Tibial artery (tissue), 4 donors: ENCODE measurements at regions of chrX and their contacts with region 1.

Region 1: DNA sequence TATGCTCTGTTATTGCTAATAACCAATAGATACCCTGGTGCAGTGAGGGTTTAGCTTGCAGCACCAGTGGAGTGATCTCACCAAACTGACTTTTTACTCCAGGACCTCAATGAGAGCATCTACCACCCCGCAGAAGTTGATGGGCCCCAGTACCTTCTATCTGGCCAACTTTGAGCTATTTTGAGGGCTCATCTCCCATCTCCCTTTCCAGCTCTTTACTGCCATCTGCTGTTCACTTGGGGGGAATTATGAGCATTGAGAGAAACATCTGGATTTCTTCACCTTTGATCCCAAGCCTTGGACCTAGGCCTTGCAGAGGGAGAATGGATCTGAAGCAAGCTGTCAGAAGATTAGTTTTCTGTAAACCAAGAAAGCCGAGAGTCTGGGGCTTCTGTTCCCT is 143.6 kb downstream of the TMEM164 start:
- DNase-seq: peak in 1 of 2 donors; percentile 22
- H3K4me3 ChIP-seq: no peak overlapping the region
- H3K27ac ChIP-seq: peak overlapping the region; percentile 45 to 62
- H3K4me1 ChIP-seq: peaks cover 0 to 41% (median 18%) of the 10 kb centered on the region in 4 donors
- H3K27me3 ChIP-seq: no peaks in the 10 kb centered on the region
- CTCF ChIP-seq: peak; percentile 49 to 52

Region 2: DNA sequence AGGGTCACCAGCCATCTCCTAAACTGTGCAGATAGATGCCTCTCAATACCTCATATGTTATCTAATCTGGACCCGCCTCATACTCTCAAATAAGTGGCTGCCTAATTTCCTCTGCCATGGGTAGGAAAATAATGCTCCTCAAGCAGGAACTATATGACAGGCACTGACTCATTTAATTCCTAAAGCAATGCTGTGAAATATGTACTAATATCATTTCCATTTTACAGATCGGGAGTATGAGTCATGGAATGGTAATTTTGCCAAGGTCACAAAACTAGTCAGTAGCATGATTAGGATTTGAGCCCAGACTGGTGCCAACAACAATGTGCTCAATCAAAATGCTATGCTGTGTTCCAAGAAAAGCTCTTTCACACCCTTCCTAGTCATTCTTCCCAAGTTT is 612.9 kb before region 1 on chrX:
- intact Hi-C with region 1: no loop called
- DNase-seq: no peak
- H3K4me3 ChIP-seq: no peak overlapping the region
- H3K27ac ChIP-seq: no peak overlapping the region
- H3K4me1 ChIP-seq: no peaks in the 10 kb centered on the region
- H3K27me3 ChIP-seq: no peaks in the 10 kb centered on the region
- CTCF ChIP-seq: no peak

Region 3: DNA sequence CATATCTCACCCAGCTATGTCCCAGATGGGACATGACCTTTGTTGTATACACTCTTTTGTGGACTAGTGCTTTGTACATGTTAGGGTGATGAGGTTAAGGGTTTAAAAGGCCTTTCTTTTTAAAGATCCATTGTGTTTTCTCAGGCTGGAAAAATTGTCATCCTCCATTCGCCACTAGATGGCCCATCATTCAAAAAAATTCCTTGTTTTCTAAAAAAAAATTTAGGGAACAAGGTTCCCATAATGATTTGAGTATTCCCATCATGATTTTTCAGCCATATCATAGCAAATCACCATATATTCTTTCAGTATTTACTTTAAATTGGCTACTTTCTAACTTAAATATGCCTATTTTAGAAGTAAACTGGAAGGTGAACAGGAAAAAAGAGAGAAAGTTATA is 235.5 kb before region 1 on chrX:
- intact Hi-C with region 1: loop called (anchors 5 kb)
- DNase-seq: no peak
- H3K4me3 ChIP-seq: no peak overlapping the region
- H3K27ac ChIP-seq: no peak overlapping the region
- H3K4me1 ChIP-seq: no peaks in the 10 kb centered on the region
- H3K27me3 ChIP-seq: no peaks in the 10 kb centered on the region
- CTCF ChIP-seq: peak; percentile 38 to 45